Activated CD4-positive, alpha-beta T cell treated with anti-CD3 and anti-CD28 coated beads, Interleukin-2, amount 10 ng/mL, durations not matched to agents 24 days and 14 days (primary cell): ENCODE measurements at regions of chr11 and their contacts with region 1.

Region 1: DNA sequence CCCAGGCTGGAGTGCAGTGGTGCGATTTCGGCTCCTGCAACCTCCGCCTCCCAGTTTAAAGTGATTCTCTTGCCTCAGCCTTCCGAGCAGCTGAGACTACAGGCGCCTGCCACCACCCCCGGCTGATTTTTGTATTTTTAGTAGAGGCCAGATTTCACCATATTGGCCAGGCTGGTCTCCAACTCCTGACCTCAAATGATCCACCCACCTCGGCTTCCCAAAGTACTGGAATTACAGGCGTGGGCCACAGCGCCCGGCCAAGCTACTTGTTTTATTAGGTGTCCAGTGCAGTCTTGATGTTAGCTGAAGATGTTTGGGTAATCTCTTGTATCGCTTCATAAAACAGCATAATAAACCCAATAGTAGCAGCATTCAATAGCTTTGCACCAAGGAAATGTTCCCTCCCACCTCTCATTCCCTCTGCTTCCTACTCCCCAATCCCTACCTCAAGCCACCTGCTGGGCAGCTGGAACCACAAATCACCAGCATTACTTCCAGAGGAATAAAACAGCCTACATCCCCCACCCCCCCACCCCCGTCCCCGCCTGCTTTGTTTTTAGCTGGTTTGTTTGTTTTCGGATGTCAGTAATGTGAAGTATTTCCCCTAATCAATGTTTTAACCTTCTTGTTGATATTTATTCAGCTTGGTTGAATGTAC is 11.0 kb upstream of the GRIK4 start:
- DNase-seq: no peak
- H3K4me3 Mint-ChIP-seq: no peak overlapping the region
- H3K27ac Mint-ChIP-seq: no peak overlapping the region
- H3K4me1 Mint-ChIP-seq: no peaks in the 10 kb centered on the region
- H3K27me3 Mint-ChIP-seq: peaks cover 42% of the 10 kb centered on the region

Region 2: DNA sequence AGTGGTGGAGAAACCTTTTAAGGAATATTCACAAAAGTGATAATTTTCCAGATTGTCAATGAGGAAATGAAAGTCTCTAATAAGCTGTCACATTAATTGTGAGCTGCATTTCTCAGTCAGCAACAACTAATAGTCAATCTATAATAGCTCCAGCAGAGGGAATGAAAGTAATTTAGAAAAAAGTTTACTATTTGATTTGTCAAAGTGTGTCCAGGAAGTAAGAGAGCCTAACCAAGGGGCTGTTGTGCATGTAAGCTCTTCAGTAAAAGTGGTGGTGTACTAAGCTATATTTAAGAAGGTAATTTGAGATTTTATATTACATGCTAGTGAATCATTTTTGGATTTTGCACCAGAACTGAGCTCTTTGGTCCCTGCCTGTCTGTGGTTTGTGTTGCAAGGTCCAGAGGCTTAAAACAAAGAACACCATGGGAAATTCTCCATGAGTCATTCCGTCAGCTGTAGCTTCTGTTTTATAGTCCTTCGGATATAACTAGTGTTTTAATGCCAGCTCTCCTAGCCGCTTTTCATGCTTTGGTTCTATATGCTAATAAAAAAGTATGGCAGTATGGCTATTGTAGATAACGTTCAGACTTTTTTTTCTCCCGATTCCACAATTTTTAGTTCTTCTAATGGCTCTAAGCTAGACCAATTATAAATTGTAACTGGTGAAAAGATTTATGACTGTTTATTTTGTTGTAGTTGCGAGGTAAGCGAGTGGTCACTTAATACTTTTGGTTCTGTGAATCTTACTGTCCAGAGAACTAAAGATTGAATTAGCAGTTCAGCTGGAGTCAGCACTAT is 99.8 kb before region 1 on chr11:
- intact Hi-C with region 1: no loop called
- DNase-seq: no peak
- H3K4me3 Mint-ChIP-seq: no peak overlapping the region
- H3K27ac Mint-ChIP-seq: no peak overlapping the region
- H3K4me1 Mint-ChIP-seq: no peaks in the 10 kb centered on the region
- H3K27me3 Mint-ChIP-seq: peaks cover 41% of the 10 kb centered on the region

Region 3: DNA sequence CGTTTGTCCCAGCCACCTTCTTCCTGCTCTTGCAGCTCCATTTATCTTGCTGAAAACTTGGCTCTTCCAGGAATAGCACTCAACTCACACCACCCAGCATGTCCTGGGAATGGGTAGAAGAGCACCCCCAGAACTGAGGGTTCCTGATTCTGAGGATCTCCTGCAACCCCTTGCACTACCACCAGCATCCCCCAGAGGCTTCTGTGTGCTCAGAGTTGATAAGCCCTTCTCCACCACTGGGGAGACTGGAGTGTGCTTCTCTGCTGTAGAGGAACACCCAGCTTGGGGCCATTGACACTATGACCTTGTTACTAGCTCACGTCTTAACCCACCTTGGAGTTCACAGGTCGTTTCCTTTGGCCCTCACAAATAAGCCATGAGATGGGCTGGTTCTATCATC is 132.0 kb after region 1 on chr11:
- intact Hi-C with region 1: loop called (anchors 5 kb)
- DNase-seq: no peak
- H3K4me3 Mint-ChIP-seq: no peak overlapping the region
- H3K27ac Mint-ChIP-seq: no peak overlapping the region
- H3K4me1 Mint-ChIP-seq: no peaks in the 10 kb centered on the region
- H3K27me3 Mint-ChIP-seq: peaks cover 3% of the 10 kb centered on the region